ENCODE measurements at regions of chr14 and their contacts with region 1.

Region 1: DNA sequence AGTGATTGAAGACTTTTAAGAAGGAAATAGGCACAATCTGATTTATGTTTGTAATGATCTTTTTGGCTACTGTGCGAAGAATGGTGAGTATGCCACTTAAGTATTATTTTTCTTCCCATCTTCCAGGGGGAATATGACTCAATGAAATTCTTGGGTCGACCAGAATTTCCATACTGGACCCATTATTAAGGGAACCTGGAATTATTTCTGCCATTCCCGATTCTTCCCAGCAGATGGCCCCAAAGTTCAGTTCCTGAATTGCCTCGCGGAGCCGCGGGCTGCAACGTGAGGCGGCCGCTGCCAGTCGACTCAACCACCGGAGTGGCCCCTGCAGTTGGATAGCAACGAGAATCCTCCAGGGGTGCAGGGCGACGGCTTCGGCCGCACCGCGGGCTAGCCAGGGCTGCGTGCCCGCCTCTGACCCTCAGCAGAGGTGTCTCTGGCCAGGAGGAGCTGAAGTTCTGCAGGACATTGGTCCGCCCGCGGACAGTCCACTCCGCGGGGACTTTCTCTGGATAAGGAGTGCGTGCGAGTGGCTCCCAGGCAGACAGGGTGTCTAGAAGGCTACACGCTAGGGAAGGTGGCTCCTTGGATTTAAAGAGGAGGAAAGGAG is 628 bp upstream of the TSHR start:
- DNase-seq: peak; percentile 56
- ATAC-seq: peak; percentile 57
- H3K4me3 Mint-ChIP-seq: peak overlapping the region; percentile 84
- H3K27ac Mint-ChIP-seq: peak overlapping the region; percentile 36
- H3K4me1 Mint-ChIP-seq: peaks cover 48% of the 10 kb centered on the region
- H3K27me3 Mint-ChIP-seq: peaks cover 9% of the 10 kb centered on the region
- CTCF ChIP-seq: no peak

Region 2: DNA sequence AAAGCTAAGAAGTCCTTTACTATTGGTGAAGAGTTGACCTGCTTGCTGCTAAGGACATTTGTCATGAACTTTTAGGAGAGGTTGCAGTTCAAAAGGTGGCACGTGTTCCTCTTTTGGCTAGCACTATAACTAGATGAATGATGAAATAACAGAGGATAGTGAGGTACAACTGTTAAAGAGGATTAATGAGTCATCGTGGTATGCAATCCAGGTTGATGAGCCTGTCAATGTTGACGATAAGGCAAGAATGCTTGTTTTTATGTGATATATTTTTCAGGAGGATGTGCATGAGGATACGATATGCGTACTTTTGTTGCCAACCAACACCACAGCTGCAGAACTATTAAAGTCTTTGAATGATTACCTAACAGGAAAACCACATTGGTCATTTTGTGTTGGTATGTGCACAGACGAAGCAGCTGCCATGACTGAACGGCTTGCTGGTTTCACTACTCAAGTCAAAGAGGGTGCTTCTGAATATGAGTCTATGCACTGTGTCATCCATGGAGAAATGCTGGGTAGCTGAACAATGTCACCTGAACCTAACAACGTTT is 23.9 kb before region 1 on chr14:
- CTCF ChIA-PET with region 1: no interaction called
- POLR2A ChIA-PET with region 1: interaction called, 4 read pairs
- intact Hi-C with region 1: loop called (anchors 1 kb)
- DNase-seq: no peak
- ATAC-seq: peak; percentile 97
- H3K4me3 Mint-ChIP-seq: peak overlapping the region; percentile 66
- H3K27ac Mint-ChIP-seq: peak overlapping the region; percentile 79
- H3K4me1 Mint-ChIP-seq: peaks cover 24% of the 10 kb centered on the region
- H3K27me3 Mint-ChIP-seq: no peaks in the 10 kb centered on the region
- CTCF ChIP-seq: no peak

Region 3: DNA sequence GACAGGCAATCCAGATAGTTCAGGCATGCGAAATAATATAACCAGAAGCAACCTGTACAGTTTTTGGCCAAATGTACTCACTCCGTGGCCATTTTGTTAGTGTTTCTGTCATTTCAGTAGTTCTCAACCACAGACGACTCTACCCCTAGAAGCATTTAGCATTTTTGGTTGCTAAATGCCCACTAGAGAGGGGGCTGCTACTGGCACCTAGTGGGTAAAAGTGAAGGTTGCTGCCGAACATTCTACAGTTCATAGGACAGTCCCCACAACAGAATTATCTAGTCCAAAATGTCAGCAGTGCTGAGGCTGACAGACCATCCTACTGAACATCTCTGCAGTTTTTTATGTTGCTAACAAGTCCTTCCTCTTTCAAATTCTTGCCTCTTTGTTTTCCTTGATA is 108.0 kb after region 1 on chr14:
- CTCF ChIA-PET with region 1: interaction called, 4 read pairs
- POLR2A ChIA-PET with region 1: no interaction called
- intact Hi-C with region 1: loop called (anchors 1 kb)
- DNase-seq: no peak
- ATAC-seq: peak; percentile 69
- H3K4me3 Mint-ChIP-seq: no peak overlapping the region
- H3K27ac Mint-ChIP-seq: no peak overlapping the region
- H3K4me1 Mint-ChIP-seq: no peaks in the 10 kb centered on the region
- H3K27me3 Mint-ChIP-seq: peaks cover 6% of the 10 kb centered on the region
- CTCF ChIP-seq: no peak

Region 4: DNA sequence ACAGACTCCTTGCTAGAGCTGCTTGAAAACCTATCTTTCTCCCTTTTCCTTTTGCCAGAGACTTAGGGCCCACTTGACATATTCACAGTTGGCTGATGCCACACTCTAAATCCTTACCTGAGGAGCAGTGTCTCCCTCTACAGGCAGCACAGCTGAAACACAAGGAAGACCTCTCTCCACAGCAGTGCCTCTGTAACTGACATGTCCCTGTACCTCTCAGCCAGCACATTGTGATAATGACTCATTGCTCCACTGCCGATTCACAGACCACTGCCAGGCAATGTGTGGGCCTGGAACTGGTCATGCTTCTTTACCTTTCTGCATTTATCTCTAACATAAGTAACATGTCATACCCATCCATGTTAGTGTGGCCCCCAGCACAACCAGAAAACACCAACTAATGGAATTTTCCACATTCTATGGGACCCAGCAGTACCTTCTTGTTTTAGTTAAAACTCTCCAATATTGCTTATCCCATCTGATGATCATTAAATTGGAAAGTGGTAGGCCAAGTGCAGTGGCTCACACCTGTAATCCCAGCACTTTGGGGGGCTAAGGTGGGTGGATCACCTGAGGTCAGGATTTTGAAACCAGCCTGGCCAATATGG is 209.5 kb after region 1 on chr14:
- CTCF ChIA-PET with region 1: no interaction called
- POLR2A ChIA-PET with region 1: no interaction called
- intact Hi-C with region 1: no loop called
- DNase-seq: no peak
- ATAC-seq: peak; percentile 64
- H3K4me3 Mint-ChIP-seq: no peak overlapping the region
- H3K27ac Mint-ChIP-seq: no peak overlapping the region
- H3K4me1 Mint-ChIP-seq: peaks cover 7% of the 10 kb centered on the region
- H3K27me3 Mint-ChIP-seq: no peaks in the 10 kb centered on the region
- CTCF ChIP-seq: no peak

Region 5: DNA sequence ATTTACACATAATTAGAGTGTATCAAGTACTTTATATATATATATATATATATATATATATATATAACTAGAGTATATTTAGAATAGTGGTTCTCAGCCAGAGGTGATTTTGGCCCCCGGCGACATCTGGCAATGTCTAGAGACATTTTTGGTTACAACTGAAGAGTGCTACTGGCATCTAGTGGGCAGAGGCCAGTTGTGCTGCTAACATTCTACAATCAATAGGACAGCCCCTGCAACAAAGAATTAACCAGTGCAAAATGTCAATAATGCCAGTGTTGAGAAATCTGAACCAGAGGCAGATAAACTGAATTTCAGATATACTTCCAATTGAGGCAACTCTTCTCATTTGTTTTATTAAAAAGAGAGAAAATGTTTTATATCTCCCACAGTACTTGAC is 257.1 kb after region 1 on chr14:
- CTCF ChIA-PET with region 1: interaction called, 3 read pairs
- POLR2A ChIA-PET with region 1: no interaction called
- intact Hi-C with region 1: loop called (anchors 1 kb)
- DNase-seq: no peak
- ATAC-seq: peak; percentile 80
- H3K4me3 Mint-ChIP-seq: no peak overlapping the region
- H3K27ac Mint-ChIP-seq: no peak overlapping the region
- H3K4me1 Mint-ChIP-seq: peaks cover 53% of the 10 kb centered on the region
- H3K27me3 Mint-ChIP-seq: no peaks in the 10 kb centered on the region
- CTCF ChIP-seq: no peak

Region 6: DNA sequence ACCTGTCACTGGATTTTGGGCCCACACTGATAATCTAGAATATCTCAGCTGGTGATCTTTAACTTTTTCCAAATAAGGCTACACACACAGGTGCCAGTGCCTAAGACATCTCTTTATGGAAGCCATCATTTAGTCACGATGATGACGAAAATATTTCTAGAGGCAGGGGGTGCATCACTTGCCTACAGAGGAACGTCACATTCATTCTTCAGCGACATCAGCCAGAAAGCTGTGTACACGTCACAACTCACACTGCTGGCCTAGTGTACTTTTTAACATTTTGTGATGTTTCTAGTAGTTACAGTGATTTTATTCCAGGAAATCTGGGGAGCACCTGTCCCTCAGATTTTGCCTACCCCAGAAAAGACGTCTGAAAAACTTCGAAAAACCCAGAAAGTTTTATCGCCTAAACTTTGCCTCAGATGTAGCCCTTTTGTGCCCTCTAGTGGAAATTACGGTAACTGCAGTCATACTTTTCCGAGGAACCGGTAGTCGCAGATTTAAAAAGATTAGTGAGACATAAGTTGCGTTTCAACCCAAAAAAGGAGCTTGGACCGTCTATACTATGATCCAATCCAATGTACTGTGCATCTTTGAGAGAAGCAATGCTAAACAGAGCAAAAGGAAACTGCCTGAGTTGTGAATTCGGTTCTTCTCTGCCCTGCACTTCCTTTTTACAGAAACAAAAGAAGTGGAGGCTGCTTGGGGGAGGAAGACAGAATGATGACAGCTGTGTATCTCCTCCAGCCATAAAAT is 509.6 kb after region 1 on chr14:
- CTCF ChIA-PET with region 1: interaction called, 3 read pairs
- POLR2A ChIA-PET with region 1: no interaction called
- intact Hi-C with region 1: loop called (anchors 1 kb)
- DNase-seq: no peak
- ATAC-seq: peak; percentile 76
- H3K4me3 Mint-ChIP-seq: peak overlapping the region; percentile 81
- H3K27ac Mint-ChIP-seq: peak overlapping the region; percentile 76
- H3K4me1 Mint-ChIP-seq: peaks cover 6% of the 10 kb centered on the region
- H3K27me3 Mint-ChIP-seq: no peaks in the 10 kb centered on the region
- CTCF ChIP-seq: peak; percentile 77

Region 7: DNA sequence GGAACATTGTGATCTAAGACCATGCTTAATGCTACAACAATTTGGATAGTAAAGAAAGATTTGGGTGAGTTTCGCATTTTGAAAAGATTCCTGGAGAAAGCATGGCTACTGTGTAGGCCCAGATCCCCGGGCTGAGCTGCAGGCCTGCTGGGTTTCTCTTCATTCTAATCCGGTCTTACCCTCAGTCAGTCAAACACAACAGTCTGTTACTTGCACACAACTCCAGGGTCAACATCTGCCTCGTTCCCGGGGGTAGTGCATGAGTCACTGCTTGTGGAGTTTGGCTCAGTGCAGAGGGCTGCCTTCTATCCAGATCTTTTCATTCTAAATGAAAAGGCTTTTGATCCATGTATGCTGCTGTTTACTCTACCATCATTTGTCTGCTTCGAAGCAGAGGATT is 639.2 kb after region 1 on chr14:
- CTCF ChIA-PET with region 1: no interaction called
- POLR2A ChIA-PET with region 1: no interaction called
- intact Hi-C with region 1: no loop called
- DNase-seq: no peak
- ATAC-seq: no peak
- H3K4me3 Mint-ChIP-seq: no peak overlapping the region
- H3K27ac Mint-ChIP-seq: no peak overlapping the region
- H3K4me1 Mint-ChIP-seq: no peaks in the 10 kb centered on the region
- H3K27me3 Mint-ChIP-seq: peaks cover 9% of the 10 kb centered on the region
- CTCF ChIP-seq: no peak